K562 (cell line): ENCODE measurements at regions of chr6 and their contacts with region 1.

Region 1: GRCh38 chr6:26156076-26156849 is 69.0 kb downstream of the HFE start:
- DNase-seq: peak; percentile 96 to 97 (median 97)
- ATAC-seq: peak; percentile 78
- H3K4me3 ChIP-seq: peak overlapping the region; percentile 65
- H3K27ac ChIP-seq: peak overlapping the region; percentile 85
- H3K4me1 ChIP-seq: peaks cover 12 to 18% of the 10 kb centered on the region in 2 experiments; a peak in 4 of 5 replicates
- H3K27me3 ChIP-seq: no peaks in the 10 kb centered on the region
- CTCF ChIP-seq: no peak
- EP300 ChIP-seq: peak; percentile 29
- POLR2A ChIP-seq: peak; percentile 100
- RAD21 ChIP-seq: 0 out of 4 replicates have a peak, but pooled peaks of 1 of the 2 experiments have one; percentile 21

Region 2: DNA sequence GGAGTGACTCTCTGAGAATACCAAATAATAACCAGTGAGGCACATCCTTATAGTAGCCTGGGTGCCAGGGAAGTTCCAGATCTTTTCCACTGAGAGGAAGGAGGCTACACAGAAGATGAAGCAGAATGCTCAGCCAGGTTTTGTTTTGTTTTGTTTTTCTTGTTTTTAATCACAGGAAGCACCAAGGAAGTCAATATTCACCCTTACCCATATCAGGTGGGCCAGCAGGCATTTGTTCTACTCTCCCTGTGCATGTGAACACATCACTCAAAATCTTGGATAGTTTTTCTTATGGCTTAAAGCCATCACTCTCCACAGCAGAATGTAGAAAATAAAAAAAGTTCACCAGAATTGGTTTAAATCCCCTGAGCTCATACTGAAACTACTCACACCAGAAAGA is 334.9 kb before region 1 on chr6:
- CTCF ChIA-PET with region 1: no interaction called
- POLR2A ChIA-PET with region 1: no interaction called
- in situ Hi-C with region 1: no loop called
- intact Hi-C with region 1: no loop called
- DNase-seq: no peak
- ATAC-seq: no peak
- H3K4me3 ChIP-seq: no peak overlapping the region
- H3K27ac ChIP-seq: no peak overlapping the region
- H3K4me1 ChIP-seq: no peaks in the 10 kb centered on the region
- H3K27me3 ChIP-seq: peaks cover 2 to 8% of the 10 kb centered on the region in 2 experiments; a peak in 2 of 5 replicates
- CTCF ChIP-seq: no peak
- EP300 ChIP-seq: no peak
- POLR2A ChIP-seq: no peak
- RAD21 ChIP-seq: no peak

Region 3: GRCh38 chr6:26025894-26026832 is 130.1 kb before region 1 on chr6:
- CTCF ChIA-PET with region 1: no interaction called
- POLR2A ChIA-PET with region 1: interaction called, 215 read pairs
- in situ Hi-C with region 1: no loop called
- intact Hi-C with region 1: loop called (anchors 1 kb)
- DNase-seq: peak; percentile 72 to 98 (median 76)
- ATAC-seq: peak; percentile 43
- H3K4me3 ChIP-seq: peak overlapping the region; percentile 46
- H3K27ac ChIP-seq: peak overlapping the region; percentile 99
- H3K4me1 ChIP-seq: peaks cover 13 to 40% of the 10 kb centered on the region in 2 experiments
- H3K27me3 ChIP-seq: no peaks in the 10 kb centered on the region
- CTCF ChIP-seq: peak; percentile 81 to 98 (median 97)
- EP300 ChIP-seq: peak; percentile 75
- POLR2A ChIP-seq: no peak
- RAD21 ChIP-seq: peak; percentile 48 to 77

Region 4: DNA sequence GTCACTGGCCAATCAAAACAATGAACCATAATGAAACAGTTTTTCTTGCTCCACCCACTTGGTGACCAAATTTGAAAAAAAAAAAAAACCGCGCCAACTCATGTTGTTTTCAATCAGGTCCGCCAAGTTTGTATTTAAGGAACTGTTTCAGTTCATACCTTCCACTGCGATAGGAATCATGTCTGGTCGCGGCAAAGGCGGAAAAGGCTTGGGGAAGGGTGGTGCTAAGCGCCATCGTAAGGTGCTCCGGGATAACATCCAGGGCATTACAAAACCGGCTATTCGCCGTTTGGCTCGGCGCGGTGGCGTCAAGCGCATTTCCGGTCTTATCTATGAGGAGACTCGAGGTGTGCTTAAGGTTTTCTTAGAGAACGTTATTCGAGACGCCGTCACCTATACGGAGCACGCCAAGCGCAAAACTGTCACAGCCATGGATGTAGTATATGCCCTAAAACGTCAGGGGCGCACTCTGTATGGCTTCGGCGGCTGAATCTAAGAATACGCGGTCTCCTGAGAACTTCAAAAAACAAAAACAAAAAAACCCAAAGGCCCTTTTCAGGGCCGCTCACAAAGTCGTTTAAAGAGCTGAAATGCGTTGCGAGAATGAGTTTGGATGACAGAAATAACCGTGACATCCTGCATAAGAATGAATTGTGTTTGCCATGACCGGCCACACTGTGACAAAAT is 52.4 kb before region 1 on chr6:
- CTCF ChIA-PET with region 1: no interaction called
- POLR2A ChIA-PET with region 1: interaction called, 43 read pairs
- in situ Hi-C with region 1: no loop called
- intact Hi-C with region 1: loop called (anchors 1 kb)
- DNase-seq: peak; percentile 78 to 98 (median 86)
- ATAC-seq: peak; percentile 91
- H3K4me3 ChIP-seq: peak overlapping the region; percentile 30
- H3K27ac ChIP-seq: peak overlapping the region; percentile 92
- H3K4me1 ChIP-seq: peaks cover 3 to 20% of the 10 kb centered on the region in 2 experiments; a peak in 3 of 5 replicates
- H3K27me3 ChIP-seq: no peaks in the 10 kb centered on the region
- CTCF ChIP-seq: peak; percentile 53 to 71 (median 61)
- EP300 ChIP-seq: peak; percentile 96
- POLR2A ChIP-seq: peak; percentile 100
- RAD21 ChIP-seq: peak; percentile 29 to 46; a peak in 3 of 4 replicates

Region 5: DNA sequence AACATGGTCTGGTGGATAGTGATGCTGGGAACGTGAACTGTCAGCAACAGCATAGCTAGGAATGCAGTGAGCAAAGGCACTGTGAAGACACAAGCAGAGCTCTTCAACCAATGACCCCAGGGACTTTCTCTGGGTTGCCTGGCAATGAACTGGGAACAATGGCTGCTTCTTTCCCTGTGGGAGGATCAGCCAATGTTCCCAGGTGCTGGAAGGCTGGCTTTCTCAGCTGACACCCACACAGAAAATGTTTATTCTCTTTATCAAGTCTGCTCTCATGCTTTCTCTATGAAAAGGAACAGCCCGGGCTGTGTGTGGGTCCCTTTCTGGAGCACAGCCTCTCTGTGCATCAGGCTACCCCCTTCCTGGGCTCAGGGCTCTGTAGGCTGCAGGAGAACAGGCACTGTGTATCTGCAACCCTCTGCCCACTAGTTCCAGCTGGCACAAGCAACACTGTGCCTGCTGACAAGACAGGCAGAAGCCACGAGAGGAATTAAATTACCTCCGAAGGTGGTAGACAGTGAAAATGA is 14.8 kb before region 1 on chr6:
- CTCF ChIA-PET with region 1: no interaction called
- POLR2A ChIA-PET with region 1: interaction called, 103 read pairs
- in situ Hi-C with region 1: no loop called
- intact Hi-C with region 1: no loop called
- DNase-seq: no peak
- ATAC-seq: peak; percentile 57
- H3K4me3 ChIP-seq: no peak overlapping the region
- H3K27ac ChIP-seq: no peak overlapping the region; the same call in 2 of the 3 replicates
- H3K4me1 ChIP-seq: no peaks in the 10 kb centered on the region
- H3K27me3 ChIP-seq: no peaks in the 10 kb centered on the region
- CTCF ChIP-seq: no peak
- EP300 ChIP-seq: no peak
- POLR2A ChIP-seq: no peak
- RAD21 ChIP-seq: no peak

Region 6: DNA sequence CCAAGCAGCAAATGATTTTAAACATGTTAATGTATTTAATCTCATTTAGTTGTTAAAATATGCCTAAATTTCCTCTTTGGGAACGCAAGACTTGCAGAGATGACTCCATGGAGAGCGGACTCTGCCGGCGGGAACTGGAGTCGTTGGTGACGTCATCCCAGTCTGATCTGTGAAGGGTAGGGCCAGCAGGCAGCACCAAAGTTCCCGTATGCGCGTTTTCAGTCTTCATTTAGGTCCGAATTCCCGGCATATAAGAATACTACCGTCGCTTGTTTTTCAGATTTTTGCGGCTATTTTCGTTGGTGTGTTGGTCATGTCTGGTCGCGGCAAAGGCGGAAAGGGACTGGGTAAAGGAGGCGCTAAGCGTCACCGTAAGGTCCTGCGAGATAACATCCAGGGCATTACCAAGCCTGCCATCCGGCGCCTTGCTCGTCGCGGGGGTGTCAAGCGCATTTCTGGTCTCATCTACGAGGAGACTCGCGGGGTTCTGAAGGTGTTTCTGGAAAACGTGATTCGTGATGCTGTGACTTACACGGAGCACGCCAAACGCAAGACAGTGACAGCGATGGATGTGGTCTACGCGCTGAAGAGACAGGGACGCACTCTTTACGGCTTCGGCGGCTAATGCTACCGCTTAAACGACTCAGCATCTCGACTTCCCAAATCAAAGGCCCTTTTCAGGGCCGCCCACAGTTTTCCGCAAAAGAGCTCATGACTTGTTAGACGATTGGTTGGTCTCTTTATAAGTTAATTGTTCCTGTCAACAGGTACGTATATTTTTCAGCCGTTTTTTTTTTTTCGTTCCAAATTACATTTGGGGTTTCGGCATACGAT is 48.3 kb after region 1 on chr6:
- CTCF ChIA-PET with region 1: no interaction called
- POLR2A ChIA-PET with region 1: interaction called, 245 read pairs
- in situ Hi-C with region 1: no loop called
- intact Hi-C with region 1: loop called (anchors 1 kb)
- DNase-seq: peak; percentile 85 to 99 (median 92)
- ATAC-seq: peak; percentile 67
- H3K4me3 ChIP-seq: peak overlapping the region; percentile 57
- H3K27ac ChIP-seq: peak overlapping the region; percentile 99
- H3K4me1 ChIP-seq: peaks cover 9 to 21% of the 10 kb centered on the region in 2 experiments; a peak in 4 of 5 replicates
- H3K27me3 ChIP-seq: no peaks in the 10 kb centered on the region
- CTCF ChIP-seq: peak in 2 of 3 experiments; percentile 67 to 70; a peak in 5 of 6 replicates
- EP300 ChIP-seq: peak; percentile 95
- POLR2A ChIP-seq: peak; percentile 100
- RAD21 ChIP-seq: peak in 1 of 2 experiments; percentile 29; a peak in 2 of 4 replicates

Region 7: DNA sequence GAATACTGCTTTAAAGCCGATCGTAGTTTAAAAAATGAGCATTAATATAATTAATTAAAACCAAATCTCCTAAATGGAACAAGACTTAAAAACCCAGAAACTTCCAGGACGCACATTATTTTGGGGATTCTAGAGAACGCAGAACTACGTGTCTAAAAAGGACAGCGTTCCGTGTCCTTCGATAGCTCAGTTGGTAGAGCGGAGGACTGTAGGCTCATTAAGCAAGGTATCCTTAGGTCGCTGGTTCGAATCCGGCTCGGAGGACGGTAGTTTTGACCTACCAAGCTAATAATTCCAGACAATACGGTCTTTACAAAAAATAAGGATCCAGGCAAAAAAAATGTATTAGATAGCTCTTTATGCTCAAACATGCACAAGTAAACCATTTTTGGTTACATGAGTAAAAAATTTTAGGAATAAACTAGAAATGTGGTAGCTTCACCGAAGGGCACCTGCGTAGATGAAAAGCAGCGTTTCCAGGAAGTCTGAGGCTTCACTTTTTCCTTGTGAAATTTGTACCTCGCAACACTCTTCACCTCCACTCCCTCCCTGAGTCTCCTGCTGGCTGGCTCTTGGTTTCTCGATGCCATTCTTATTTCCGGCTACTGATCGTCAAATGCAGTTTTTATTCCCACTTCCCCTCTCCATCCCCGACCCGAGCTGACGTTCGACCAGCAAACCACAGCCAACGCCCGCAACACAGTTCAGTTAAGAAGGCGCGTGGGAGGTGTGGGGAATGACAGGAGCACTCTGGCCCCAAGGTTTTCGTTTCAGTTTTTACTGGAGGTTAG is 420.9 kb after region 1 on chr6:
- CTCF ChIA-PET with region 1: no interaction called
- POLR2A ChIA-PET with region 1: interaction called, 13 read pairs
- in situ Hi-C with region 1: no loop called
- intact Hi-C with region 1: no loop called
- DNase-seq: peak; percentile 60 to 96 (median 68)
- ATAC-seq: peak; percentile 77
- H3K4me3 ChIP-seq: peak overlapping the region; percentile 34
- H3K27ac ChIP-seq: peak overlapping the region; percentile 63
- H3K4me1 ChIP-seq: peaks cover 9 to 23% of the 10 kb centered on the region in 2 experiments; a peak in 4 of 5 replicates
- H3K27me3 ChIP-seq: no peaks in the 10 kb centered on the region
- CTCF ChIP-seq: no peak
- EP300 ChIP-seq: peak; percentile 52; the same call in 1 of the 2 replicates
- POLR2A ChIP-seq: no peak
- RAD21 ChIP-seq: 0 out of 4 replicates have a peak, but pooled peaks of 1 of the 2 experiments have one; percentile 10